Posterior vena cava (tissue), 2 donors: ENCODE measurements at regions of chr6 and their contacts with region 1.

Region 1: DNA sequence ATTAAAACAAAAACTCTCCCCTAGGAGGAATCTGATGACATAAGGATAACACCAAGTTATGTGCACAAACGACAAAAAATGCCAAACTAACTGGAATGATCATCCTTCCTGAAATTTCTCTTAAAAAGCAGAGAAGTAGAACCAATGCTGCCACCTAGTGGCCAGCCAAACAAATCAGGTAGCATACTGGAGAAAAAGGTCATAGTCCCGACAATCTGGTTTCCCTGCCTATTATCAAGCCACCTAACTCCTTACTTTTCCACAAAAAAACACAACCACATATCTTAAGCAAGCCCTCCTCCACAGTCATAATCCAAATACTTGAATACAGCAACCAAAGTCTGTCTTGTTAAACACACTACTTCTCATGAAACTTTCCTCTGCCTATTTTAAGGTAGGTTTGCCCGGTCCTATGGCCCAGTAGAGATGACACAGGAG is 5.3 kb downstream of the OARD1 start:
- DNase-seq: peak; percentile 91

Region 2: DNA sequence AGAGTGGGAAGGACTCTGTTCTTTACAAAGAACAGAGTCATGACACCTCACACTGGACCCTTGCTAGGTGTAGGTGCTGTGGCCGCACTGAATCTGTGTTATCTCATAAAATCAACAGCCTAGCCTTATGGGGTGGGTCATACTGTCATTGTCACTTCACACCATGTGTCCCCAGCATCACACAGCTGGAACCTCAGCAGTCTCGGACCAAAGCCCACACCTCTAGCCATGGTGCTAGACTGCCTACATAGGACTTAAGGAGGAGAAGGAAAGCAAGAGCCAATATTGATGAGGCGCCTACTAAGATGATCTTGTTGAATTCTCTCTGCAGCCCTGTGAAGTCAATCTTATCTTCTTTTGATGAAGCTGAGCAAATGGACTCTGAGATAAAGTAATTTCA is 58.9 kb before region 1 on chr6:
- intact Hi-C with region 1: loop called (anchors 5 kb)
- DNase-seq: no peak

Region 3: GRCh38 chr6:41386594-41386993 is 319.7 kb after region 1 on chr6:
- intact Hi-C with region 1: no loop called
- DNase-seq: no peak

Region 4: GRCh38 chr6:41406728-41407489 is 340.0 kb after region 1 on chr6:
- intact Hi-C with region 1: no loop called
- DNase-seq: no peak